Activated CD4-positive, alpha-beta memory T cell treated with anti-CD3 and anti-CD28 coated beads for 36 hours (primary cell): ENCODE measurements at regions of chr6 and their contacts with region 1.

Region 1: DNA sequence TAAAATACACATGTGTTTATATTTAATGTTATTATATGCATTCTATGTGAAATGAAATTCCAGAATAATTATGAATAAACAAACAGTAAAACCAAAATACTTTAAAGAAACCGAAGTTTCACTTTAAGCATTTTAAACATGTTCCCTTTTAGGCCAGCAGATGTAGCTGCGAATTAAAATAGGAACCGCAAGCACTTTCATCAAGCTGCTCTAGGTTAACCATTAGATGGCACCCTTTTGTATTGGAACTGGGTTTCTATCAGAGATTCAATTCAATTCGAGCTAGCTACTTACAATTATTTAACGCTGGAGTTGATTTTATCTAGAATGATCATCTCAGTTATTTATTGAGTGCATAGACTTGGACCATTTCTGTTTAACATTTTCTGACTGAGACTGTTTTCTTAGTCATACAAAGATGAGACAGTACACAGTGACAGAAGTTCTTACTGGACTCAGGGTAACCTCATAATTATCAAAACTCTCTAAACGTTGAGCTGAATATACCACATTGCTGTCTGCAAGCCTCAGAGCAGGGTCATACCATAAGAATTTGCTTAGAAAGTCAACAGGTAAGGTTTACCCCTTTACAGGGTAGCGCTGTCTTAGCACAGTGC is 8.5 kb downstream of the TMEM242 start:
- DNase-seq: no peak
- H3K4me3 Mint-ChIP-seq: no peak overlapping the region
- H3K27ac Mint-ChIP-seq: no peak overlapping the region
- H3K4me1 Mint-ChIP-seq: peaks cover 12% of the 10 kb centered on the region
- H3K27me3 Mint-ChIP-seq: no peaks in the 10 kb centered on the region

Region 2: GRCh38 chr6:157292202-157292601 is 22.6 kb before region 1 on chr6:
- CTCF ChIA-PET with region 1: no interaction called
- POLR2A ChIA-PET with region 1: no interaction called
- intact Hi-C with region 1: no loop called
- DNase-seq: no peak
- H3K4me3 Mint-ChIP-seq: no peak overlapping the region
- H3K27ac Mint-ChIP-seq: no peak overlapping the region
- H3K4me1 Mint-ChIP-seq: no peaks in the 10 kb centered on the region
- H3K27me3 Mint-ChIP-seq: no peaks in the 10 kb centered on the region

Region 3: DNA sequence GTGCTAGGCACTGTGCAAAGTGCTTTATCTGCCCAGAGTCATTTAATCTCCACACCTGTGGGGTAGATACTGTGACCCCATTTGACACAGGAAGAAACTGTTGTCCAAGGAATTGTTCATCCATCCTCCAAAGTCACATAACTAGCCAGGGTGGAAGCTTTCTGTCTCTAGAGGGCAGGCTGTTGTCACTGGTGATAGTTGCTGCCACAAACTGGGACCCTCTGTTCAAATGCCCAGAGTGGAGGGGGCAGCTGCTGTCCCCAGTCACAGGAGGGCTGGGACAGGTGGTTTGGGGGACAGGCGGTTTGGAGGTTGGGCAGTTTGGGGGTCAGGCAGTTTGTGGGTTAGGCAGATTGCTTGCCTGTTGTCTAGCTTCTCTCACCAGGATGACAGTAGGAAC is 24.6 kb after region 1 on chr6:
- CTCF ChIA-PET with region 1: interaction called, 69 read pairs
- POLR2A ChIA-PET with region 1: no interaction called
- intact Hi-C with region 1: loop called (anchors 1 kb)
- DNase-seq: no peak
- H3K4me3 Mint-ChIP-seq: no peak overlapping the region
- H3K27ac Mint-ChIP-seq: no peak overlapping the region
- H3K4me1 Mint-ChIP-seq: no peaks in the 10 kb centered on the region
- H3K27me3 Mint-ChIP-seq: peaks cover 41% of the 10 kb centered on the region

Region 4: DNA sequence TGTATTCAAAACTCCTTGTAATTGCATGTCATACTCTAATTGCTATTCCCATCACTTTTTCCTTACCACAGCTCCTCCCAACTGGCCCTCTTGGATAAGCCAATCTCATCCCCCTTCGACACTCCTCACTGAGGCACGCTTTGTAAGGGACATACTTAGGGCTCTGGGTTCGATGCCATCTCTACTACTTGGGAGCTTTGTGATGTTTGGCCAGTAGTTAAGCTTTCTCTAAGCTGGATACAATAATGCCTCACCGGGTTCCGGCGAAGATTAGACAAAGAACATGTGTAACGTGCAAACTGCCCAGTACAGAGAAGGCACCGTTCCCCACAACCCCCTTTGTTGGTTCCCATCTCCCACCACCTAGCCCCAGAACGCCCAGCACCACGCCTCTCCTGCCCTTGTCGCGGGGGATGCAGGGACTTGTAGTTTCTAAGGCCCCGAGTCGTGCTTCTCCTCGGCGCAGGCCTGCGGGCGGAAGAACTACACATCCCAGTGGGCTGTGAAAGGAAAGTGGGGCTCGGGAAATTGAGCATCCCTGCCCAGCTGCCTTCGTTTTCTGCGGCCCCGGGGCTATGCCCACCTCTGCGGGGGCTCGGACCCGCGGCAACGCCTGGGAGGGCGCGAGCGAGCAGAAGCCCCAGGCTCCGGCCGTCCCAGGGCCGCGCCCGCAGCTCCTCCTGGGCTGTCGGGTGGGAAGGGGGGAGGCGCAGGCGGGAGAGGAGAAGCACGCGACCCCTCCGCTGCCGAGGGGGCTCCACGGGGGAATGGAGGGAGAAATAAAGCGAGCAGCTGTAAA is 65.0 kb after region 1 on chr6:
- CTCF ChIA-PET with region 1: interaction called, 5 read pairs
- POLR2A ChIA-PET with region 1: no interaction called
- intact Hi-C with region 1: loop called (anchors 2 kb)
- DNase-seq: peak; percentile 93
- H3K4me3 Mint-ChIP-seq: peak overlapping the region; percentile 78
- H3K27ac Mint-ChIP-seq: peak overlapping the region; percentile 71
- H3K4me1 Mint-ChIP-seq: peaks cover 31% of the 10 kb centered on the region
- H3K27me3 Mint-ChIP-seq: peaks cover 9% of the 10 kb centered on the region

Region 5: DNA sequence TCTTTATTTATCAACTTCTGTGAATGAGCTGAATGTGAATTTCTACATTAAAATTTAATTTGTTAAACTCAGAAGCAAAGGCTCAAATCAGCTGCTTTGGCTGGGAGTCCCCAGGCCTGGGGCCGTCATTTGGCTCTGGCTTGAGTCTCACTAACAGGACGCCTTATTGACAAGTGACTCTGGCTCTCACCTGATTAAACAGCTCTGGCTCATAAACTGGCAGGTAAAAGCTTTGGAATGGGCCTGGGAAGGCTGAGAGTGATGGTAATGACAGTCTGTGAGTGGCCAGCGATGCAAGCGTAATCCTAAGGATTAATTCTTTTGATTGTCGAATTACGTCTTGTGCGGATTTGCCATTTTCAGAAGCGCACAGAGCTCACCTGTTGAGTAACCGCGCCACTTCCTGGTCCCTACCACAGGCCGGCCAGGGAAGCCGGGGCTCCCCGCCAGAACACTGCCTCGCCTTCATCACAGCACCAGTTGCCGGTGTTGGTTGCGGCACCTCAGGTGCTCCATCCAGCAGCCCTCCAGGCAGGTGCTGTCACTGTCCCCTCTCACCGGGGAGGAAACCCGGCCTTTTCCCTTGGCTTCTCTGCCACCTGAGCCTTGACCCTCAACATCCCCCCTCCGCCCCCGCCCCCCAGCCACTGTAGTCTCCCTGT is 176.9 kb after region 1 on chr6:
- CTCF ChIA-PET with region 1: no interaction called
- POLR2A ChIA-PET with region 1: no interaction called
- intact Hi-C with region 1: no loop called
- DNase-seq: no peak
- H3K4me3 Mint-ChIP-seq: no peak overlapping the region
- H3K27ac Mint-ChIP-seq: no peak overlapping the region
- H3K4me1 Mint-ChIP-seq: peaks cover 5% of the 10 kb centered on the region
- H3K27me3 Mint-ChIP-seq: peaks cover 6% of the 10 kb centered on the region

Region 6: GRCh38 chr6:157597446-157598312 is 282.9 kb after region 1 on chr6:
- CTCF ChIA-PET with region 1: interaction called, 10 read pairs
- POLR2A ChIA-PET with region 1: no interaction called
- intact Hi-C with region 1: loop called (anchors 1 kb)
- DNase-seq: peak; percentile 59
- H3K4me3 Mint-ChIP-seq: no peak overlapping the region
- H3K27ac Mint-ChIP-seq: no peak overlapping the region
- H3K4me1 Mint-ChIP-seq: no peaks in the 10 kb centered on the region
- H3K27me3 Mint-ChIP-seq: no peaks in the 10 kb centered on the region

Region 7: GRCh38 chr6:157667211-157668008 is 352.6 kb after region 1 on chr6:
- CTCF ChIA-PET with region 1: interaction called, 66 read pairs
- POLR2A ChIA-PET with region 1: no interaction called
- intact Hi-C with region 1: loop called (anchors 1 kb)
- DNase-seq: peak; percentile 68
- H3K4me3 Mint-ChIP-seq: no peak overlapping the region
- H3K27ac Mint-ChIP-seq: no peak overlapping the region
- H3K4me1 Mint-ChIP-seq: peaks cover 13% of the 10 kb centered on the region
- H3K27me3 Mint-ChIP-seq: peaks cover 7% of the 10 kb centered on the region

Region 8: GRCh38 chr6:158072083-158072721 is 757.4 kb after region 1 on chr6:
- CTCF ChIA-PET with region 1: interaction called, 5 read pairs
- POLR2A ChIA-PET with region 1: no interaction called
- intact Hi-C with region 1: loop called (anchors 5 kb)
- DNase-seq: peak; percentile 80
- H3K4me3 Mint-ChIP-seq: no peak overlapping the region
- H3K27ac Mint-ChIP-seq: peak overlapping the region; percentile 64
- H3K4me1 Mint-ChIP-seq: peaks cover 23% of the 10 kb centered on the region
- H3K27me3 Mint-ChIP-seq: no peaks in the 10 kb centered on the region